Mammary epithelial cell (primary cell): ENCODE measurements at regions of chr2 and their contacts with region 1.

Region 1: DNA sequence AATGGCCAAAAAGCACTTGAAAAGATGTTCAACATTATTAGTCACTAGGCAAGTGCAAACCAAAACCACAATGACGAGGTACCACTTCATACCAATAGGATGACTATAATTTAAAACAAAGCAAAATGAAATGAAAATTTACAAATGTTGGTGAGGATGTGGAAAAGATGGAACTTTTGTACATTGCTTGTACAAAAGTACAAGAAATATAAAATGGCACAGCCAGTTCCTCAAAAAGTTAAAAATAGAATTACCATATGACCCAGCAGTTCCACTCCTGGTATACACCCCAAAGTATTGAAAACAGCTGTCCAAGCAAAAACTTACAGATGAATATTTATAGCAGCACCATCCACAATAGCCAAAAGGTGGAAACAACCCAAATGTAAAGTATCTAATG is 107.8 kb upstream of the XPO1 start:
- DNase-seq: peak; percentile 77
- H3K4me3 ChIP-seq: no peak overlapping the region
- H3K27ac ChIP-seq: no peak overlapping the region
- H3K4me1 ChIP-seq: peaks cover 4% of the 10 kb centered on the region
- H3K27me3 ChIP-seq: peaks cover 2% of the 10 kb centered on the region
- CTCF ChIP-seq: no peak

Region 2: GRCh38 chr2:61419129-61419528 is 226.8 kb before region 1 on chr2:
- CTCF ChIA-PET with region 1: no interaction called
- dilution Hi-C with region 1: no loop called
- in situ Hi-C with region 1: loop called in 1 of 2 experiments (anchors 25 kb)
- intact Hi-C with region 1: no loop called
- DNase-seq: no peak
- H3K4me3 ChIP-seq: no peak overlapping the region
- H3K27ac ChIP-seq: no peak overlapping the region
- H3K4me1 ChIP-seq: peaks cover 9% of the 10 kb centered on the region
- H3K27me3 ChIP-seq: no peaks in the 10 kb centered on the region
- CTCF ChIP-seq: no peak

Region 3: DNA sequence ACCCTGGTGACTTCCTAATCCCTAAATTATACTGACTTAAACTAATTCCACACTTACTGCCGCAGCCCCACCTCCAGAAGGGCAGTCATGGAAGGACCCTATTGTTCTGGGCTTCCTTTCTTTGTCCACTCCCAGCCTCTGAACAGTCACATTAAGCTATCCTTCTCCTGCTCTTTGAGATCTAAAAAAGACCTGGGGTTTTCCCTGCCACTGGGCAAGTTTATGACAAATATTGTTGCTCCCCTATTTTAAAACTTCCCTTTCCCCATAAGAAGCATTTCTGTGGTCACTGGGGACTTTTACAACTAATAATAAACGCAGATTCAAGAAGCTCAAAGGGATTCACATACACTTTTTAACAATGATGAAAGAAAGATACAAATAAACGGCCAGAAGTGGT is 60.5 kb before region 1 on chr2:
- CTCF ChIA-PET with region 1: no interaction called
- dilution Hi-C with region 1: no loop called
- in situ Hi-C with region 1: no loop called
- intact Hi-C with region 1: no loop called
- DNase-seq: no peak
- H3K4me3 ChIP-seq: no peak overlapping the region
- H3K27ac ChIP-seq: no peak overlapping the region
- H3K4me1 ChIP-seq: no peaks in the 10 kb centered on the region
- H3K27me3 ChIP-seq: peaks cover 2% of the 10 kb centered on the region
- CTCF ChIP-seq: no peak

Region 4: GRCh38 chr2:61816480-61817355 is 170.8 kb after region 1 on chr2:
- CTCF ChIA-PET with region 1: no interaction called
- dilution Hi-C with region 1: no loop called
- in situ Hi-C with region 1: no loop called
- intact Hi-C with region 1: no loop called
- DNase-seq: no peak
- H3K4me3 ChIP-seq: no peak overlapping the region
- H3K27ac ChIP-seq: no peak overlapping the region
- H3K4me1 ChIP-seq: no peaks in the 10 kb centered on the region
- H3K27me3 ChIP-seq: peaks cover 9% of the 10 kb centered on the region
- CTCF ChIP-seq: no peak

Region 5: GRCh38 chr2:62423232-62423631 is 777.3 kb after region 1 on chr2:
- CTCF ChIA-PET with region 1: no interaction called
- dilution Hi-C with region 1: no loop called
- in situ Hi-C with region 1: no loop called
- intact Hi-C with region 1: no loop called
- DNase-seq: peak; percentile 14
- H3K4me3 ChIP-seq: no peak overlapping the region
- H3K27ac ChIP-seq: no peak overlapping the region
- H3K4me1 ChIP-seq: peaks cover 17% of the 10 kb centered on the region
- H3K27me3 ChIP-seq: no peaks in the 10 kb centered on the region
- CTCF ChIP-seq: peak; percentile 14 to 30